Activated CD8-positive, alpha-beta T cell treated with anti-CD3 and anti-CD28 coated beads, Interleukin-2, amount 10 ng/mL, durations not matched to agents 7 days and 5 days (primary cell): ENCODE measurements at regions of chr5 and their contacts with region 1.

Region 1: DNA sequence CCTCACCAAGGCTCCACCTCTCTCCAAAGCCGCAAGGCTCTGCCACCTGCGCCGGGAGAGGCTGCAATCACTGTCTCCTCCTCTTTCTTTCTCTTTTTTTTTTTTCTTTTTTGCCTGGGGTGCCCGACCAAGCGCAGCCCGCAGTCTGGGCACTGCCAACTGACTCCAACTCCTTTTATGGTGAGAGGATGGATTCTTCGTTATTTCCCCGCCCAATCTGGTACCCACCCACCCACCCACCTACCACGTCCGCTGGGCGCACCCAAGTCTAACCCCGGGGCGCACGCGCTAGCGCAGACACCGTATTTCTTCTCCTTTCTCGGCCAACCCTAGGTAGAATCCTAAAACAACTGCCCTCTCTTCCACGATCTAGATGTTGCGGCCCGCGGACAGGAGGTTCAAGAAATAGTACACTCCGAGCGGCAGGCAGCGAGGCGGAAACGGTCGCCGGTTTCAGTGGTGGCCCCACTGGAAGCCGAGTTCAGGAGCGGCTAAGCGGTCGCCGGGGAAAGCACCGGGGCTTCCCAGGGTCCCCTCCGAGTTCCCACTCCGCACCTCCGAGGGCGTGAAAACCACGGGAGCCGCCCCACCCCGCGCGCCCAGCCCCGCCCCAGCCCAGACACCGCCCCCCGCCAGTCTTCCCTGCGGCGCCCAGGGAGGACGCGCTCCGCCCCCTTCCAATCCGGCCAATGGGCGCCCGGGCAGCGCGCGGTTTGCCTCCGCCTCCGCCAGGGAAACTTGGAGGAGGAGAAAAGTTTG is 381 bp upstream of the PTGER4 start:
- DNase-seq: peak; percentile 92
- ATAC-seq: peak; percentile 71
- H3K4me3 Mint-ChIP-seq: peak overlapping the region; percentile 82
- H3K27ac Mint-ChIP-seq: peak overlapping the region; percentile 91
- H3K4me1 Mint-ChIP-seq: peaks cover 47% of the 10 kb centered on the region
- H3K27me3 Mint-ChIP-seq: no peaks in the 10 kb centered on the region

Region 2: GRCh38 chr5:39948867-39949468 is 730.4 kb before region 1 on chr5:
- CTCF ChIA-PET with region 1: interaction called, 11 read pairs
- POLR2A ChIA-PET with region 1: interaction called, 5 read pairs
- DNase-seq: peak; percentile 77
- ATAC-seq: peak; percentile 94
- H3K4me3 Mint-ChIP-seq: no peak overlapping the region
- H3K27ac Mint-ChIP-seq: no peak overlapping the region
- H3K4me1 Mint-ChIP-seq: peaks cover 2% of the 10 kb centered on the region
- H3K27me3 Mint-ChIP-seq: peaks cover 2% of the 10 kb centered on the region

Region 3: GRCh38 chr5:40404613-40405012 is 274.7 kb before region 1 on chr5:
- CTCF ChIA-PET with region 1: interaction called, 8 read pairs
- POLR2A ChIA-PET with region 1: interaction called, 28 read pairs
- DNase-seq: peak; percentile 56
- ATAC-seq: peak; percentile 57
- H3K4me3 Mint-ChIP-seq: peak overlapping the region; percentile 57
- H3K27ac Mint-ChIP-seq: peak overlapping the region; percentile 88
- H3K4me1 Mint-ChIP-seq: peaks cover 77% of the 10 kb centered on the region
- H3K27me3 Mint-ChIP-seq: no peaks in the 10 kb centered on the region

Region 4: DNA sequence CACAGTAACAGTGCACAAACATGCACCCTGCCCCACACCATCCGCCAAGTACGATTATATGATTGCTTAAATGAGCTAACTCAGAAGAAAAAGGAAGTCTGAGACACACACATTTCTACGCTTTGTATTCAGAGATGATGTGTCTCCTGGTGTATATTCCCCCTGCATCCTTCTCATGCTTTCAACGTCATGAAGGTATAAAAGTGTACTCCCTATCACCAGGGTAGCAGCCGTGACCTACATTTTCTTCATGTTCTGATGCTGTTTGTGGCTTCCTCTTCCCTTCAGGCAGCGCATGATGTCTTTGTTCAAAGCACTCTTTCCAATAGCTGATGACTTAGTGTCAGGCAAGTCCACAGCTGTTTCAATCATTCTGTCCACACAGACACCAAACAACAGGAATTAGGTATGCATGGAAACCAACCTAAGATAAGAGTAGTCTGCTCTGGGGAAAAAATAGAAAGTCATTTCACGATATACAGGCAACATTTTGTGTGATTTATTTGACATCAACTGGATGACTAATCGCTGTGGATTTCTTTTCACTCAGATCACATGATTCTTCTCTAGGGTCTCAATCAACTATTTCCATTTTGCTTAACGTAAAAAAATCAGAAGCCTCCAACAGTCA is 269.0 kb before region 1 on chr5:
- CTCF ChIA-PET with region 1: interaction called, 8 read pairs
- POLR2A ChIA-PET with region 1: interaction called, 28 read pairs
- DNase-seq: peak; percentile 82
- ATAC-seq: peak; percentile 85
- H3K4me3 Mint-ChIP-seq: peak overlapping the region; percentile 60
- H3K27ac Mint-ChIP-seq: peak overlapping the region; percentile 91
- H3K4me1 Mint-ChIP-seq: peaks cover 62% of the 10 kb centered on the region
- H3K27me3 Mint-ChIP-seq: no peaks in the 10 kb centered on the region

Region 5: GRCh38 chr5:40437452-40437861 is 241.9 kb before region 1 on chr5:
- CTCF ChIA-PET with region 1: interaction called, 7 read pairs
- POLR2A ChIA-PET with region 1: interaction called, 11 read pairs
- DNase-seq: peak; percentile 37
- ATAC-seq: peak; percentile 41
- H3K4me3 Mint-ChIP-seq: no peak overlapping the region
- H3K27ac Mint-ChIP-seq: peak overlapping the region; percentile 83
- H3K4me1 Mint-ChIP-seq: peaks cover 79% of the 10 kb centered on the region
- H3K27me3 Mint-ChIP-seq: no peaks in the 10 kb centered on the region

Region 6: DNA sequence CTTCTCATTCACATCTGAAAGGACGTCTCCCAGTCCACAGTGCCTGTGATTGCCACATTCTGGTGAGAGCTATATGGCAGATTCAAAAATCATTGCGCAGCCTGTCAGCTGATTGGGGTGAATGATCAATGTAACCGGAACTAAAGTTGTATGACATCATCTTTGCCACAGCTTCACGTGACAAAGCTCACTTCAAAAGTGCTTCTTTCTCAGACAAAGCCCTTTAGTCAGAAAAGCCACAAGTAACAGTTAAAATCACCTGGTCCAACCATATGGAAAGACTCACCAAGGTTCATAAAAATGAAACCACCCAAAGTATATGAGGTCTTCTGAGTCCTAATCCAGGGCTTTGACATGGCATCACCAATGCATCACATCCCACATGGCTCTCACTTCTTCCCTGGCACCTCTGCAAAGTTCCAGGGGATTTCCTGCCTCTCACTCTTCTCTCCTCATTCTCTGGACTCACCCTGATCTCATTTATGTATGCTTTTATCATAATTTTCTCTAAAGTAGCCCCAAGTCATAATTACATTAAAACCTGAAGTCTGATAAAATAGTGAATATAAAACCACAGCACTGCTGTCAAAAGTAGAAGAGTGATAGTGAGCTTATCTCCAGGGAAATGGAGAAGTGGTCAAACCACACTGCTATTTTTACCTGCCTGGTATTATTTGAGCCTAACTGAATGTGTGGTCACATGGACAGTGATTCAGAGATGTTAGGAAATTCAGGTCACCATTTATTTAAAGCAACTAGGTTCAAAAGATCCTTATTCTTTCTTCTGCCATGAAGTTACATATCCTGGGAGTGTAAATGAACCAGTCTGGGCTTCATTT is 192.7 kb before region 1 on chr5:
- CTCF ChIA-PET with region 1: interaction called, 4 read pairs
- POLR2A ChIA-PET with region 1: interaction called, 21 read pairs
- DNase-seq: peak; percentile 83
- ATAC-seq: peak; percentile 88
- H3K4me3 Mint-ChIP-seq: peak overlapping the region; percentile 4
- H3K27ac Mint-ChIP-seq: peak overlapping the region; percentile 76
- H3K4me1 Mint-ChIP-seq: peaks cover 76% of the 10 kb centered on the region
- H3K27me3 Mint-ChIP-seq: no peaks in the 10 kb centered on the region

Region 7: GRCh38 chr5:40652441-40653220 is 26.7 kb before region 1 on chr5:
- CTCF ChIA-PET with region 1: interaction called, 34 read pairs
- POLR2A ChIA-PET with region 1: interaction called, 60 read pairs
- DNase-seq: peak; percentile 58
- ATAC-seq: peak; percentile 53
- H3K4me3 Mint-ChIP-seq: peak overlapping the region; percentile 81
- H3K27ac Mint-ChIP-seq: peak overlapping the region; percentile 90
- H3K4me1 Mint-ChIP-seq: peaks cover 86% of the 10 kb centered on the region
- H3K27me3 Mint-ChIP-seq: no peaks in the 10 kb centered on the region